Heart left ventricle (tissue), 16 donors: ENCODE measurements at regions of chr6 and their contacts with region 1.

Region 1: GRCh38 chr6:26596579-26597388 is at the start of gene ABT1:
- DNase-seq: peak; percentile 98 to 99 (median 98)
- ATAC-seq: peak; percentile 97 to 100 (median 99)
- H3K4me3 ChIP-seq: peak within 1 kb of the TSS; percentile 67 to 96 (median 87)
- H3K27ac ChIP-seq: peak within 1 kb of the TSS; percentile 79 to 94 (median 88)
- H3K4me1 ChIP-seq: peaks cover 0 to 36% (median 13%) of the 10 kb centered on the region in 12 donors
- H3K27me3 ChIP-seq: peaks cover 3 to 30% (median 19%) of the 10 kb centered on the region in 9 donors
- CTCF ChIP-seq: no peak
- POLR2A ChIP-seq: peak in 1 of 2 donors; percentile 71
- total RNA-seq, gene ABT1: 7.2 to 10.8 (median 8.2) TPM

Region 2: GRCh38 chr6:26097268-26097875 is 499.4 kb before region 1 on chr6:
- intact Hi-C with region 1: no loop called
- DNase-seq: peak in 4 of 5 donors; percentile 43 to 58 (median 50)
- ATAC-seq: peak; percentile 56 to 87 (median 86)
- H3K4me3 ChIP-seq: no peak overlapping the region
- H3K27ac ChIP-seq: no peak overlapping the region
- H3K4me1 ChIP-seq: peaks cover 0 to 16% (median 0%) of the 10 kb centered on the region in 12 donors
- H3K27me3 ChIP-seq: no peaks in the 10 kb centered on the region
- CTCF ChIP-seq: peak; percentile 69 to 85 (median 78)
- POLR2A ChIP-seq: no peak

Region 3: DNA sequence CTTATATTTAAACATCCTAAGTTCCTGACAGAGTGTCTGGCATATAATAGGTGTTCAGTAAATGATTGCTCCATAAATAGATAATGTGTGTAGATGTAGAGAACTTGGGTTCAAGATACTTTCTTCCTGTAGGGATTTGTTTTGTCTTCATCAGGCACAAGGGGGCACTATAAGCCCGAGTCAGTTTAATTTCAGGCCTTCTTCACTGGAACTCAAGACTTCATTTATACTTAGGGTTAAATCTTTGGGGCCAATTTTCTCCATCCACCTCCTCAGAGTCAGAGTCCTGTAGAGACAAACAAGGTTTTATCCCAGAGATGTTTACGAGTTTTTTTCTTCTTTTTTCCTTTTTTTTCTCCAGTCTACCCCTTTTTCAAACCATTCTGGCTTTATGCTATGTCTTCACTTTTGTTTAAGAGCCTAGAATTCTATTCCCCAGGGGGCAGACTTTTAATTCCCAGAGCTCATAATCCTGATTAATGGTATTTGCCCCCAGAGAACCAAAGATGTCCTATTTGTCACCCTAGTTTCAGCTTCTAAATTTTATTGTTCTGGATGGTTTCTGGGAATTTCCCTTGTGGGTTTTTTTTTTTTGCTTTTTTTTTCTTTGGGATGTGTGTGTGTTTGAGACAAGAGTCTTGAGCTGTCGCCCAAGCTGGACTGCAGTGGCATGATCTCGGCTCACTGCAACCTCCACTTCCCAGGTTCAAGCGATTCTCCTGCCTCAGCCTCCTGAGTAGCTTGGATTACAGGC is 421.2 kb before region 1 on chr6:
- intact Hi-C with region 1: loop called in 4 of 10 experiments (anchors 5 to 10 kb)
- DNase-seq: no peak
- ATAC-seq: no peak
- H3K4me3 ChIP-seq: no peak overlapping the region
- H3K27ac ChIP-seq: peak overlapping the region in 2 of 12 donors; percentile 1 to 40
- H3K4me1 ChIP-seq: peaks cover 0 to 20% (median 9%) of the 10 kb centered on the region in 12 donors
- H3K27me3 ChIP-seq: no peaks in the 10 kb centered on the region
- CTCF ChIP-seq: peak; percentile 45 to 76 (median 62)
- POLR2A ChIP-seq: no peak

Region 4: DNA sequence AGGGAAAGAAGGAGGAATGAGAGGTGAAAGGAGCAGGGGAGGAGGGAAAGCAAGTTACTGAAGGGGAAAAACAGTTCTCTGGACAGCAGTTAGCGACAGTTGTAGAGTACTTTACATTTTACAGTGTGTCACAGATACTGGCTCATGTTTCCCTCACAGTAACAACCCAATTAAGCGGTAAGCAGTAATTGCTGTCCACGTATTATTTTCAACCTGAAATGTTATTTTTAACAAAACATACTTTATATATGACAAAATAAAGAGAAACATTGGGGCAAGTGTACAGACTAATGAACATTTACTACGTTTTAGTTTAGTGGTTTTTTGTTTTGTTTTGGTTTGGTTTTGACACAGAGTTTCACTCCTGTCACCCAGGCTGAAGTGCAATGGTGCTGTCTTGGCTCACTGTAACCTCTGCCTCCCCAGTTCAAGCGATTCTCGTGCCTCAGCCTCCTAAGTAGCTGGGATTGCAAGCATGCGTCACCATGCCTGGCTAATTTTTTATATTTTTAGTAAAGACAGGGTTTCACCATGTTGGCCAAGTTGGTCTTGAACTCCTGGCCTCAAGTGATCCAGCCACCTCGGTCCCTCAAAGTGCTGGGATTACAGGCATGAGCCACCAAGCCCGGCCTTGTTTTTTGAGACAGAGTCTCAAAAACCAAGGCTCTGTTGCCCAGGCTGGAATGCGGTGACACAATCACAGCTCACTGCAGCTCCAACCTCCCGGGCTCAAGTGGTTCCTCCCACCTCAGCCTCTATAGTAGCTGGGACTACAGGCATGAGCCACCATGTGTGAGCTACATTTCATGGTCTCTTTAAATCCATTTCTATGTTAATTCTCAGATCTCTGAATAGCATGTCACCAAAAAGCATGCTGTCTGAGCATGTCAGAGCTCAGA is 254.4 kb before region 1 on chr6:
- intact Hi-C with region 1: loop called (anchors 1 to 5 kb)
- DNase-seq: no peak
- ATAC-seq: no peak
- H3K4me3 ChIP-seq: peak overlapping the region in 1 of 12 donors; percentile 33
- H3K27ac ChIP-seq: no peak overlapping the region
- H3K4me1 ChIP-seq: peaks cover 0 to 5% (median 0%) of the 10 kb centered on the region in 12 donors
- H3K27me3 ChIP-seq: peaks cover 0 to 39% (median 15%) of the 10 kb centered on the region in 9 donors
- CTCF ChIP-seq: no peak
- POLR2A ChIP-seq: no peak

Region 5: DNA sequence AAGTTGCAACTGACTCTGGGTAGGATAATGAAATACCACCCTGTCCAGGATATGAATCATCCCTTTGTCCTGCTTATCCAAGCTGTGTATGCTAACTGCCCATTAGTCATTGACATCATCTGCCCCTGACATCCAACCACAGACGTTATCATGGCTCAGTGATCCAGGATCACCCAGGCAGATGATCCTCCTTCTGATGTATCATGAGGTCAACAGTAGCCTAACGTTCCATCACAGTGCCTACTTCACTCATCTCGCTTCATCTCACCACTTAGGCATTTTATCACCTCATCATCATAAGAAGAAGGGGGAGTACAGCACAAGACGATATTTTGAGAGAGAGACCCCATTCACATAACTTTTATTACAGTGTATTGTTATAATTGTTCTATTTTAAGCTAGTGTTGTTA is 245.2 kb before region 1 on chr6:
- intact Hi-C with region 1: loop called in 2 of 10 experiments (anchors 5 kb)
- DNase-seq: no peak
- ATAC-seq: no peak
- H3K4me3 ChIP-seq: no peak overlapping the region
- H3K27ac ChIP-seq: no peak overlapping the region
- H3K4me1 ChIP-seq: no peaks in the 10 kb centered on the region
- H3K27me3 ChIP-seq: no peaks in the 10 kb centered on the region
- CTCF ChIP-seq: no peak
- POLR2A ChIP-seq: no peak

Region 6: GRCh38 chr6:26514984-26515383 is 81.8 kb before region 1 on chr6:
- intact Hi-C with region 1: no loop called
- DNase-seq: no peak
- ATAC-seq: no peak
- H3K4me3 ChIP-seq: no peak overlapping the region
- H3K27ac ChIP-seq: no peak overlapping the region
- H3K4me1 ChIP-seq: peaks cover 0 to 1% (median 0%) of the 10 kb centered on the region in 12 donors
- H3K27me3 ChIP-seq: no peaks in the 10 kb centered on the region
- CTCF ChIP-seq: no peak
- POLR2A ChIP-seq: no peak

Region 7: GRCh38 chr6:27132532-27133280 is 535.9 kb after region 1 on chr6:
- intact Hi-C with region 1: loop called in 1 of 10 experiments (anchors 5 kb)
- DNase-seq: peak; percentile 81 to 89 (median 86)
- ATAC-seq: peak; percentile 94 to 98 (median 97)
- H3K4me3 ChIP-seq: peak overlapping the region; percentile 15 to 68 (median 60)
- H3K27ac ChIP-seq: peak overlapping the region; percentile 34 to 91 (median 80)
- H3K4me1 ChIP-seq: peaks cover 0 to 46% (median 8%) of the 10 kb centered on the region in 12 donors
- H3K27me3 ChIP-seq: no peaks in the 10 kb centered on the region
- CTCF ChIP-seq: no peak
- POLR2A ChIP-seq: peak; percentile 53 to 97

Region 8: GRCh38 chr6:27864906-27865849 is 1268.4 kb after region 1 on chr6:
- intact Hi-C with region 1: loop called in 1 of 10 experiments (anchors 10 kb)
- DNase-seq: peak; percentile 31 to 72 (median 54)
- ATAC-seq: peak; percentile 91 to 94 (median 94)
- H3K4me3 ChIP-seq: peak overlapping the region; percentile 55 to 98 (median 70)
- H3K27ac ChIP-seq: peak overlapping the region in 8 of 12 donors; percentile 14 to 85 (median 62)
- H3K4me1 ChIP-seq: peaks cover 6 to 41% (median 22%) of the 10 kb centered on the region in 12 donors
- H3K27me3 ChIP-seq: peaks cover 0 to 37% (median 18%) of the 10 kb centered on the region in 9 donors
- CTCF ChIP-seq: no peak
- POLR2A ChIP-seq: peak in 1 of 2 donors; percentile 49